GM12878 (cell line): ENCODE measurements at regions of chr3 and their contacts with region 1.

Region 1: DNA sequence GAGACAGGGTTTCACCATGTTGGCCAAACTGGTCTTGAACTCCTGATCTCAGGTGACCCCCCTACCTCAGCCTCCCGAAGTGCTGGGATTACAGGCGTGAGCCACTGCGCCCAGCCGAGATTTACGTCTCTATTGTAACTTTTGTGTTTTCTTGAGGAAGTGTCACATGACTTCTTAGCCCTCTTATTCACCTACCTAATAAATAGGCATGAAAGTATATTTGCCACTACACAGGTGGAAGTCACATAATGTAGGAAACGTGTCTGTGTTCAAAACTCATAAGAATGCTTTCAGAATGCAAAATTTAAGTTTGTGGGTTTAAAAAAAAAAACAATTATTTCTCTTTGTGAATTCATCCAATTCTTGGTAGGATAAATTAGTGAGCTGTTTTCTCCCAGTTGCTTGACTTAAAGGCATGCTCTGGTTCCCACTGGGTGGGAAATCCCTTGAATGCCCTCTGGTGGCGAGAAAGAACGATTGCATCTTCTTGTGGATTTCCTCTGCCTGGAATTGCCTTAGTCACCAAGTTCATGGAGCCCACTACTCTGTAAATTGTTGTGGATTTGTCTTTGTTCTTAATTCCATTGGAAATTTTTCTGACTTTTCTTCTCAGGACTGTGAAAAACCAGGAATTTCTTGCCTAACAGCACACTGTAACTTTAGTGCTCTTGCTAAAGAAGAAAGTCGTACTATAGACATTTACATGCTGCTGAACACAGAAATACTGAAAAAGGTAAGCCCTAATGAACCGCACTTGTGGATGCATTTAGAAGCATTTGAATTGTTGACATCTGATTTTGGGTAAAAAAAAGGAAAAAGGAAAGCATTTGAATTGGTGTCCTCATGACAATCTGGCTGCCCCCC is 82.2 kb upstream of the CTDSPL start:
- DNase-seq: no peak
- ATAC-seq: peak; percentile 89
- H3K4me3 ChIP-seq: no peak overlapping the region
- H3K27ac ChIP-seq: no peak overlapping the region
- H3K4me1 ChIP-seq: no peaks in the 10 kb centered on the region
- H3K27me3 ChIP-seq: no peaks in the 10 kb centered on the region
- CTCF ChIP-seq: peak; percentile 82 to 85 (median 83)
- EP300 ChIP-seq: no peak
- POLR2A ChIP-seq: no peak
- RAD21 ChIP-seq: peak; percentile 87

Region 2: GRCh38 chr3:36729204-36730056 is 1050.1 kb before region 1 on chr3:
- CTCF ChIA-PET with region 1: no interaction called
- POLR2A ChIA-PET with region 1: no interaction called
- RAD21 ChIA-PET with region 1: interaction called, 3 read pairs
- SMC1A ChIA-PET with region 1: no interaction called
- in situ Hi-C with region 1: loop called (anchors 25 kb)
- intact Hi-C with region 1: no loop called
- DNase-seq: no peak
- ATAC-seq: peak; percentile 77
- H3K4me3 ChIP-seq: no peak overlapping the region
- H3K27ac ChIP-seq: no peak overlapping the region
- H3K4me1 ChIP-seq: no peaks in the 10 kb centered on the region
- H3K27me3 ChIP-seq: no peaks in the 10 kb centered on the region
- CTCF ChIP-seq: peak; percentile 56 to 79 (median 65)
- EP300 ChIP-seq: no peak
- POLR2A ChIP-seq: no peak
- RAD21 ChIP-seq: peak; percentile 90

Region 3: DNA sequence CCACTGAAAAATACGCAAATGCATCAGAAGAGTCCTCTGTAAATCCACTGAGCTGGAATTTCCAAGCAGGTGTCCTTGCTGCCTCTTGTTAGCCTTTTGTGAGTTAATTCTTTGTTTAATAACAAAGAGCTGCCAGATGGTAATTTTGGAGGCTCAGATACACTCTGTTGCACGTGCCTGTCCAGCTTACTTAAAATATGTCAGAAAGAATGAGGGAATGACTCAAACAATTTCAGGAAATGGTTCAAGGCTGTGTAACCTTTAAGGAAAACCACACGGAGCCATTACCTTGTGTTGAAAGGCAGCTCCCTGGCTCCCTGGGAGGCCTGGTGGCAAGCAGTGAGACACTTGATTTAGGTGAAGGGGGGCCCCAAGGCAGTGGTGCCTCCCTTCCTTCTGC is 220.1 kb before region 1 on chr3:
- CTCF ChIA-PET with region 1: interaction called, 3 read pairs
- POLR2A ChIA-PET with region 1: no interaction called
- RAD21 ChIA-PET with region 1: no interaction called
- SMC1A ChIA-PET with region 1: interaction called, 3 read pairs
- in situ Hi-C with region 1: no loop called
- intact Hi-C with region 1: loop called (anchors 2 kb)
- DNase-seq: no peak
- ATAC-seq: no peak
- H3K4me3 ChIP-seq: no peak overlapping the region
- H3K27ac ChIP-seq: no peak overlapping the region
- H3K4me1 ChIP-seq: no peaks in the 10 kb centered on the region
- H3K27me3 ChIP-seq: no peaks in the 10 kb centered on the region
- CTCF ChIP-seq: no peak
- EP300 ChIP-seq: no peak
- POLR2A ChIP-seq: no peak
- RAD21 ChIP-seq: no peak

Region 4: DNA sequence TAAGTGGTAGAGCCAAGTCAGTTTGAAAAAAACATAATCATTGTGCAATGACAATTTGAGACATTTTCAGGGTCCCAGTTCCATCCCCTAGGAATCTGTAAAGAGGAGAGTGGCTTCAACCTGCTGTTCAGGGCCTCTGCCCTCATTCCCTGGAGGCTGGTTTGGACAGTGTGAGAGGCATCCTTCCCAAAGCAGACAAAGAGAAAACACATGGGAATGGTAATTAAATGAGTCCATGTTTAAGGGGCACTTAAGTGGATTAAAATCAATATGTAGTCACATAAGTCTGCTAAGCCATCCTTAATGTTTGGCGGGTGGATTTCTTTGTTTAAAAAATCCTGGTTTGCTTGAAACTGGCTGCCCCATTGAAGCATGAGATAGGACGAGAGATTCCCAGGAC is 64.2 kb before region 1 on chr3:
- CTCF ChIA-PET with region 1: no interaction called
- POLR2A ChIA-PET with region 1: no interaction called
- RAD21 ChIA-PET with region 1: no interaction called
- SMC1A ChIA-PET with region 1: no interaction called
- in situ Hi-C with region 1: no loop called
- intact Hi-C with region 1: loop called (anchors 2 kb)
- DNase-seq: no peak
- ATAC-seq: no peak
- H3K4me3 ChIP-seq: no peak overlapping the region
- H3K27ac ChIP-seq: no peak overlapping the region
- H3K4me1 ChIP-seq: no peaks in the 10 kb centered on the region
- H3K27me3 ChIP-seq: 0 out of 4 replicates have a peak, but pooled peaks cover 2 to 4% of the 10 kb centered on the region in 2 experiments
- CTCF ChIP-seq: no peak
- EP300 ChIP-seq: no peak
- POLR2A ChIP-seq: no peak
- RAD21 ChIP-seq: no peak